Endothelial cell of umbilical vein (primary cell): ENCODE measurements at regions of chr17 and their contacts with region 1.

Region 1: DNA sequence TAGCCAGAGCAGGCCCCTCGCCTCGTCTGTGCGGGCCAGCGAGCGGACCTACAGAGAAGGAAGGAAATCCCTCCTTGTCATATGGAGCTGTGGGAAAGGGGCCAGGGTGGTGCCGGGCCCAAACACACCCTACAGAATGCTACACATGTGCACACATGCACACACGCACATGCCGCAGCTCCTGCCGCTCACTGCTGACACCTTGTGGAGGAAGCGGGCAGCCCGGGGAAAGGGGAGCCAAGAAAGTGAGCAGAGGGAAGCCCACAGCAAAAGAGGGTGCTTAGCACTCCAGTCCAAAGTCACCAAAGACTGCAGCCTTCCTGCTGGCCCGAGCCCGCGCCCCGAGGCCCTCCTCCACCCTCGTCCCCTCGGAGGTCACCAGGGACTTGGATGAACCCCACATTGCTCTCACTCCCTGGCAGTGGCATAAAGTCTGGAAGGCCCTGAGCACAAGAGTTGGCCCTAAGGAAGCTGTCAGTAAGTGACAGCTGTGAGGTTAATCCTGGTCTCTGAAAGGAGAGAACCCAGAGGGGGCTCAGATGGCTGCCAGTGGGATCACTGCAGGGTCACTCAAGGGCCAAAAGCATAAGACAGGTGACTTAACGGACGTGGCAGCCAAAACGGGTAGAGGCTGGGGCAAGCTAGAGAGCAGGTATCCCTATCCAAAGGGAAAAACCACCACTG is 68.2 kb downstream of the MYO18A start:
- DNase-seq: peak; percentile 62
- H3K4me3 ChIP-seq: no peak overlapping the region
- H3K27ac ChIP-seq: no peak overlapping the region
- H3K4me1 ChIP-seq: peaks cover 3% of the 10 kb centered on the region
- H3K27me3 ChIP-seq: no peaks in the 10 kb centered on the region
- CTCF ChIP-seq: peak; percentile 85 to 98
- POLR2A ChIP-seq: no peak

Region 2: DNA sequence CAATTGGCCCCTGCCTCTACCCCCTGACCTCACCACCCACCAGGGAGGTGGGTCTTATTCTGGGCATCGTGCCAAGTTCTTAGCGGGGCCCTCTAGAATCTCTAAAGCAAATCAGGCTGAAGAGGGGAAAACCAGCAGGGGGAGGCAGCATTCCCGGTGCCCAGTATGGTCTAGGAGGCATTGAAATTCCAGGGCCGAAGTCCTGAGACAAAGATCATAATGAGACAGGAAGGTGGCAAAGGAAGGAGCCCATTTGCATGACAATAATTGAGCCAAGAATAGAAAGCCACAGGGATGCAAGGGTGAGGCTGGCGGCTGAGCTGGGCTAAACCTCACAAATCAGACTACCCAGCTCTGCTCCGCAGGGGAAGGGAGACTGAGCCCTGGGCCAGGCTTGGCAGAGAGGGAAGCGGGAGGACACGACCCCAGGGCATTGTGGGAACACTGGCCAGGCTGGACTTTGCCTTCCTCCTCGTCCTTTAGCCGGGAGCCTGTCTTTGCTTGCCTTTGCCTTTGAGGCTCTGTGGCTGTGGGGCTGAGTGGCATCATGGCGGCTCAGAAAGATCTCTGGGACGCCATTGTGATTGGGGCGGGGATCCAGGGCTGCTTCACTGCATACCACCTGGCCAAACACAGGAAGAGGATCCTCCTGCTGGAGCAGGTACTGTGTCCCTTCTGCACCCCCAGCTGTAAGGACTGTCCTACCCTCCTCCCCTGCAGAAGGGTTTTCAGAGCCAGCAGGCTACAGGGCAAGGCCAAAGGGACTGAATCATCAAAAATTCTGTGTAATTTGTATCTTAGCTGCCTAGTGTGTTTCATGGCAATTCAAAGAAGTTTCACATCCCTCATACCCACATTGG is 69.0 kb before region 1 on chr17 and contains the start of gene PIPOX:
- CTCF ChIA-PET with region 1: interaction called, 13 read pairs
- POLR2A ChIA-PET with region 1: no interaction called
- dilution Hi-C with region 1: no loop called
- intact Hi-C with region 1: loop called (anchors 2 kb)
- DNase-seq: peak; percentile 54
- H3K4me3 ChIP-seq: no peak within 1 kb of the TSS
- H3K27ac ChIP-seq: no peak within 1 kb of the TSS
- H3K4me1 ChIP-seq: peaks cover 7% of the 10 kb centered on the region
- H3K27me3 ChIP-seq: peaks cover 20% of the 10 kb centered on the region in 2 experiments
- CTCF ChIP-seq: peak; percentile 4 to 33
- POLR2A ChIP-seq: no peak
- total RNA-seq, gene PIPOX: 2.2 and 2.5 TPM in 2 replicates

Region 3: GRCh38 chr17:29124117-29124924 is 12.4 kb after region 1 on chr17:
- CTCF ChIA-PET with region 1: interaction called, 25 read pairs
- POLR2A ChIA-PET with region 1: no interaction called
- dilution Hi-C with region 1: no loop called
- intact Hi-C with region 1: no loop called
- DNase-seq: peak; percentile 61
- H3K4me3 ChIP-seq: no peak overlapping the region
- H3K27ac ChIP-seq: no peak overlapping the region
- H3K4me1 ChIP-seq: no peaks in the 10 kb centered on the region
- H3K27me3 ChIP-seq: no peaks in the 10 kb centered on the region
- CTCF ChIP-seq: peak; percentile 60 to 61
- POLR2A ChIP-seq: no peak

Region 4: DNA sequence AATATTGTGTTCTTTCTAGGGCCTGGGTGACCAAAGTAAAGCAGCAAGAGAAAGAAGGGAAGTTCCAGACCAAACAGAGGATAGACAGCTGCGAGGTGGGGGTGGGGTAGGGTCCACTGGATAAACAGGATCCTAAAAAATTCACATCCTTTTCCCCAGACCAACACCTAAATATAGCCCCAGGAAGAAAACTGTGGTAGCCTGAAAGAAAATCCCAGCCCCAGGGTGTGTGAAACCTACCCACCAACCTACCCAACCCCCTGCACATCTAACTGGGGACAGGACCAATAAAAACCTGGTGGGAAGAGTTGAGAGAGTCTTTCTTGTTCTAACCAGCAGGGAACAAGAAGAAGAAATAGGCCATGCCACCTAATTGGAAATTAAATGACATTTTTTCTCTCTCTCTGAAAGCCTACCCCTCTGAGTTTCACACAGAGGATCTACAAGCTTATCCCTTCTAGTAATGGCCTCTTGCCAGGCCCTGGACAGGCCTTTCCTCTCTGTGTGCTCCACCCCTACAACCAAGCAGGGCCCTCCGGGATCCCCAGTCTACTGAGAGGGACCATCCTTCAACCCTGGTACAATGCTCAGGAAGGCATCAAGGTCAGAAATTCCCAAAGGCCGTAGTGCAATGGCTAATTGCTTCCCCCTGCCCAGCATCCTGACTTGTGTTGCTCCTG is 56.3 kb after region 1 on chr17:
- CTCF ChIA-PET with region 1: no interaction called
- POLR2A ChIA-PET with region 1: no interaction called
- dilution Hi-C with region 1: no loop called
- intact Hi-C with region 1: no loop called
- DNase-seq: peak; percentile 27
- H3K4me3 ChIP-seq: no peak overlapping the region
- H3K27ac ChIP-seq: no peak overlapping the region
- H3K4me1 ChIP-seq: no peaks in the 10 kb centered on the region
- H3K27me3 ChIP-seq: no peaks in the 10 kb centered on the region
- CTCF ChIP-seq: no peak
- POLR2A ChIP-seq: no peak

Region 5: GRCh38 chr17:29212681-29213121 is 100.7 kb after region 1 on chr17:
- CTCF ChIA-PET with region 1: no interaction called
- POLR2A ChIA-PET with region 1: no interaction called
- dilution Hi-C with region 1: no loop called
- intact Hi-C with region 1: no loop called
- DNase-seq: no peak
- H3K4me3 ChIP-seq: no peak overlapping the region
- H3K27ac ChIP-seq: no peak overlapping the region
- H3K4me1 ChIP-seq: no peaks in the 10 kb centered on the region
- H3K27me3 ChIP-seq: no peaks in the 10 kb centered on the region
- CTCF ChIP-seq: no peak
- POLR2A ChIP-seq: no peak

Region 6: DNA sequence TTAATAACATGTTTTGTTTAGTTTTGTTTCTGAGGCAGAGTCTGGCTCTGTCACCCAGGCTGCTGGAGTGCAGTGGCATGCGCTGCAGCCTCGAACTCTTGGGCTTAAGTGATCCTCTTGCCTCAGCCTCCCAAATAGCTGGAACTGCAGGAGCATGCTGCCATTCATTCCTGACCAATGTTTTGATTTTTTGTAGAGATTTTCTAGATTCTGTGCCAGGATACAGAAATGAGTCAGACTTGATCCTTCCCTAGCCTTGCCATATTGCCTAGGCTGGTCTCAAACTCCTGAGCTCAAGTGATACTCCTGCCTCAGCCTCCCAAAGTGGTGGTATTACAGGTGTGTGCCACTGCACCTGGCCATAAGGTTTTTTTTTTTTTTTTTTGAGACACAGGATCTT is 295.9 kb after region 1 on chr17:
- CTCF ChIA-PET with region 1: no interaction called
- POLR2A ChIA-PET with region 1: no interaction called
- dilution Hi-C with region 1: no loop called
- intact Hi-C with region 1: no loop called
- DNase-seq: no peak
- H3K4me3 ChIP-seq: no peak overlapping the region
- H3K27ac ChIP-seq: no peak overlapping the region
- H3K4me1 ChIP-seq: peaks cover 13% of the 10 kb centered on the region
- H3K27me3 ChIP-seq: no peaks in the 10 kb centered on the region
- CTCF ChIP-seq: no peak
- POLR2A ChIP-seq: no peak